ENCODE measurements at regions of chr2 and their contacts with region 1.

Region 1: DNA sequence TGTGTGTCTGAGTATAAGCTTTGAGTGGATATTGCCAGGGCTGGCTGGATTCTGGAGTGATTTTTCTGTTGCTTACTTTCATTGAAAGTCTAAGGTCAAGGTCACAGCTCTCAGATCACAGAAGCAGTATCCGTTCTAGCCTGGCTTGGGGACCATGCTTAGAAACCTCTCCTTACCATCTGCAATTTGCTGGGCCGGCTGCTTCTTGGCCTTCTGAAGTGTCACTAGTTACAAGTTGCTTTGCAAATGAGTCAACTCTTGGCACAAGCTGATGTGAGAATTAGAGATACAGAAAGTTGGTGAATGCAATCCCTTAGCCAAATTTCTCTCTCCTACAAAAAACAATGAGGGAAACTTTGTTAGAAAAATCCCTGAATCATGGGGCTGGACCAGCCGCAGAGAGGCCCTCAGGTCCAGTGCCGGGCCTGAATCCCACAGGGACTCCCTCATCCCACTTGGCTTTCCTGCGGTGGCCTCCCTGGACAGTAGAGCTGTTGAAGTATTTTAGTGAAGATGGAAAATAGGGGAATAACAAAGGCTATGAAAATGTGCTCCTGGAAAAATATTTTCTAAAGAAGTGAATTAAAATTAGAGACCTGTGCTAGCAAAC is 92.7 kb upstream of the CNGA3 start:
- DNase-seq: no peak
- ATAC-seq: peak; percentile 54
- H3K4me3 ChIP-seq: no peak overlapping the region
- H3K27ac ChIP-seq: peak overlapping the region; percentile 51 to 57
- H3K4me1 ChIP-seq: no peaks in the 10 kb centered on the region
- H3K27me3 ChIP-seq: no peaks in the 10 kb centered on the region

Region 2: GRCh38 chr2:98149333-98149697 is 104.3 kb before region 1 on chr2:
- intact Hi-C with region 1: loop called in 1 of 2 experiments (anchors 10 kb)
- DNase-seq: no peak
- ATAC-seq: peak; percentile 57
- H3K4me3 ChIP-seq: peak overlapping the region; percentile 1 to 33
- H3K27ac ChIP-seq: peak overlapping the region in 1 of 2 donors; percentile 64
- H3K4me1 ChIP-seq: peaks cover 0 to 3% of the 10 kb centered on the region in 2 donors
- H3K27me3 ChIP-seq: no peaks in the 10 kb centered on the region

Region 3: GRCh38 chr2:98185801-98186200 is 67.8 kb before region 1 on chr2:
- intact Hi-C with region 1: loop called in 1 of 2 experiments (anchors 2 kb)
- DNase-seq: no peak
- ATAC-seq: no peak
- H3K4me3 ChIP-seq: no peak overlapping the region
- H3K27ac ChIP-seq: no peak overlapping the region
- H3K4me1 ChIP-seq: no peaks in the 10 kb centered on the region
- H3K27me3 ChIP-seq: no peaks in the 10 kb centered on the region

Measured in aorta (tissue), 5 donors.